Right ventricle myocardium superior (tissue), 1 donor: ENCODE measurements at regions of chr15 and their contacts with region 1.

Region 1: DNA sequence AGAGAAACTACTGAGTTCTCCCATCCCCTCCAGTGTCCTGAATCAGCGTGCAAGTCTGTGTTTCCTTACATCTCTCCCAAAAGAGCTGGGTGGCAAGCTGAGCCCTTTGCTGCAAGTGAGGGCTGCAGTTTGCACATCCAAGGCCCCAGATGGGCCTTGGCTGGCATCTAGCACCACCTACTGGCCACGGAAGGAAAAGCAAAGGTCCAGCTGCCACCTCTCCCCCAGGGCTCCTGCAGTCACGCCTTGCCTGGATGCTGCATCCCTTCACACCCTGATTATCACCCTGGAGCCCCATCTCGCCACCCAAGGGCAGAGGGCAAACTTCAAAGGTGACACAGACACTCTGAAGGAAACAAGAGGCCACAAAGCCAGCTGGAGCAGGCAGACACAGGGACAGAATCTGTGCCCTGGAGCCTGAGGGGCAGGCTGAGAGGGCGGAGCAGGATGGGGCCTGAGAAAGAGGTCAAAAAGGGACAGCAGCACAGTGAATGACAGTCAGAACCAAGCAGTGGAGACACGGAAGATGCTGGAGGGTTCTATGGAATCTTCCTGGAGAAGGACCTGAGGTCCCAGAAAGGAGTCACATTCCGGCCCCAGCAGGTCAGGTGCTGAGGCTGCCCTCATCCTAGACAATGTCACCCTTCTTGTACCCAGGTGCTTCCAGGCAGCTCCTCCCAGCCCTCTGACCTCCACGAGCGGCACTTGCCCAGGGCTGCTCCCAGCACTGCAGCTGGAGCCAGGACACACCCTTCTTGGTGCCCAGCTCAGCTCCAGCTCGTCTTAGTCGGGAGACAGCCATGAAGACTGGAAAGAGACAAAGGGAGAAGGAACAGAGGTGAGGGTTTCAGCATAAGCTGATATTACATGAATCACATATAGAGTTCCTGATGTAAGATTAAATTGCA is 18.3 kb upstream of the NTRK3 start:
- DNase-seq: peak; percentile 66
- ATAC-seq: peak; percentile 91

Region 2: GRCh38 chr15:86624261-86625036 is 1650.4 kb before region 1 on chr15:
- intact Hi-C with region 1: loop called (anchors 10 kb)
- DNase-seq: peak; percentile 80
- ATAC-seq: peak; percentile 99